ENCODE measurements at regions of chr1 and their contacts with region 1.

Region 1: GRCh38 chr1:112722601-112723510 is 7.7 kb upstream of the PPM1J start:
- DNase-seq: no peak
- H3K4me3 ChIP-seq: no peak overlapping the region
- H3K27me3 ChIP-seq: no peaks in the 10 kb centered on the region; the same call in 1 of the 2 replicates
- CTCF ChIP-seq: no peak

Region 2: DNA sequence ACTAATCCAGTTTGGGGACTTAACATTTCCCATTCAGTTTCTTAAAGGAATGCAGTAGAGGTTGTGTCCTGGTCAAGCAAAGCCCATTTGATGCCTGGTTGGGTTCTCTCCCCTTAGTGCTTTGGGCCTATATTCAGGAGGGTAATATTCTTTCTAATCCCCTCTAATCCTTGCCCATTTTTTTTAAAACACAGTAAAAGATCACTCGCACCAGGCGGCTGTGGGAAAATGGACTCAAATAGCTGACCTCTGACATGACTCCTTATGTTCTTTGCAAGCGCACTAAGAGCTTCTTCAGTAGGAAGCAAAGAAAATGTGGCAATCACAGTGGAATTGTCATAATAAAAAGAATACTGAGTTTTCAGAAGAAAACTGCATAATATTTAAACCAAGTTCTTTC is 164.2 kb before region 1 on chr1:
- CTCF ChIA-PET with region 1: no interaction called
- POLR2A ChIA-PET with region 1: no interaction called
- DNase-seq: no peak
- H3K4me3 ChIP-seq: no peak overlapping the region
- H3K27me3 ChIP-seq: no peaks in the 10 kb centered on the region
- CTCF ChIP-seq: no peak

Region 3: DNA sequence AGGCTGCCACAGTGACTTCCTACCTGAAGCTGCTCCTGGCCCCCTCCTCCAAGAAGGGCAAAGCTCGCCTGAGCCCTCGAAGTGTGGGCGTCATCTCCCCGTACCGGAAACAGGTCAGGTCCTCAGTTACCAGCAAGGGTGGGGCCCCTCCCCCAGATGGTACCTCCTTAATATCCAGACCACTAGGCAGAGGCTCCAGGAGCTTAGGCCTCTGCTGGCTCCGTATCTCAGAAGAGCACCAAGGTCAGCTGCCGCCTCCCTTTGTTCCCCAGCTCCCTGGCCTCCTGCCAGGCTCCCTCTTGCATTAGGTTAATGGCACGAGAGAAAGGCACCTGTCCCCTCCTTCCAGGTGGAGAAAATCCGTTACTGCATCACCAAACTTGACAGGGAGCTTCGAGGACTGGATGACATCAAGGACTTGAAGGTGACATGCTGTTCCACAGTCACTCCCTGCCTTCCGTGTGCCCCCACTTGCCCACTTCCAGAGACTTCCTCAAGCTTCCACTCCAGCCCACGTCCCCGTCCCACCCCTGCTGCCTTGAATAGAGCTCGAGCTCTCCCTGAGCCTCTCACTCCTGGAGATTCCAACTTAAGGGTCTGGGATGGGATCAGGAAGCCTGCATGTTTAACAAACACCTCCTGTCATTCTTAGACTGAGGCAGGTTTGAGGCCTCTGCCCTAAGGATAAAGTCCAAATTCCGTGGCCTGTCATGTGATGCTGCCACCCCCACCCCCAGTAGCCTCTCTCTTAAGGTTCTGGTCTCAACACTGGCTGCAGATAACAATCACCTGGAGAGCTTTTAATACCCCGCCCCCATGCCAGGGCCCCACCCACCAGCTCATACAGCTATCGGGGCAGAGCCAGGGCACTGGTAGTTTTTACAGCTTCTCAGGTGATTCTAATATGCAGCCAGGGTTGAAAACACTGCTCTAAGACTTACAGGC is 24.2 kb before region 1 on chr1:
- CTCF ChIA-PET with region 1: no interaction called
- POLR2A ChIA-PET with region 1: no interaction called
- DNase-seq: no peak
- H3K4me3 ChIP-seq: no peak overlapping the region
- H3K27me3 ChIP-seq: no peaks in the 10 kb centered on the region
- CTCF ChIP-seq: no peak

Region 4: GRCh38 chr1:112744009-112744578 is 21.2 kb after region 1 on chr1:
- CTCF ChIA-PET with region 1: interaction called, 160 read pairs
- POLR2A ChIA-PET with region 1: interaction called, 8 read pairs
- DNase-seq: no peak
- H3K4me3 ChIP-seq: peak overlapping the region; percentile 22
- H3K27me3 ChIP-seq: peaks cover 7% of the 10 kb centered on the region
- CTCF ChIP-seq: peak; percentile 83